Activated CD4-positive, alpha-beta memory T cell treated with anti-CD3 and anti-CD28 coated beads, Interleukin-2, amount 10 ng/mL, durations not matched to agents 7 days and 5 days (primary cell): ENCODE measurements at regions of chr7 and their contacts with region 1.

Region 1: DNA sequence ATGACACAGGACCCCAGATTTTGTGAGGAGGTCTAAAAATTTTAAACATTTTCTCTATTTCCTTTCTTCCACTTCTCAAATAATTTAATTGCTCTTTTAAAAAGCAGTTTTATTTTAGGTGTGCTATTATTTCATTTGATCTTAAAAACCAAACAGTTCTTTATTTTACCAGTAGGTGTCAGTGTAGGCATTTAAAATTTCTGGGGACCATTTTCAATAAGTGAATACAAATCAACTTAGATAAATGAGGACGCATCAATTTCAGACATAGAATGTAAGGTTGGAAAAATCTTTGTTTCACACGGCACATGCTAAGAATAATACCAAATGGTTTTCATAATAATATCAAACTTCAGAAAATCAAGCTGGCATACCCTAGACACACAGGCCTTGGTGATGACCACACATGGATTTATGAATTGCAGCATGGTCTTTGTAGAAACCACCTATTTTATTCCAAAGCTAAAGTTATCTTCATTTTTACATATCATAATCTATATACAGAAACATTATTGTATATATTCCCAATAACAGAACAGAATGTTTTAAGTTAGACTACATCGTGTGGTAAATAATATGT is 127.6 kb upstream of the SLC26A5 start:
- DNase-seq: no peak
- H3K4me3 Mint-ChIP-seq: no peak overlapping the region
- H3K27ac Mint-ChIP-seq: no peak overlapping the region
- H3K4me1 Mint-ChIP-seq: no peaks in the 10 kb centered on the region
- H3K27me3 Mint-ChIP-seq: peaks cover 10% of the 10 kb centered on the region

Region 2: GRCh38 chr7:104160375-104160774 is 586.8 kb after region 1 on chr7:
- CTCF ChIA-PET with region 1: interaction called, 10 read pairs
- POLR2A ChIA-PET with region 1: no interaction called
- DNase-seq: no peak
- H3K4me3 Mint-ChIP-seq: no peak overlapping the region
- H3K27ac Mint-ChIP-seq: no peak overlapping the region
- H3K4me1 Mint-ChIP-seq: no peaks in the 10 kb centered on the region
- H3K27me3 Mint-ChIP-seq: no peaks in the 10 kb centered on the region